ENCODE measurements at regions of chr3 and their contacts with region 1.

Region 1: GRCh38 chr3:189967254-189967865 is 153.3 kb downstream of the P3H2 start:
- DNase-seq: peak; percentile 49
- H3K4me3 ChIP-seq: no peak overlapping the region
- H3K27ac ChIP-seq: no peak overlapping the region
- H3K4me1 ChIP-seq: no peaks in the 10 kb centered on the region
- H3K27me3 ChIP-seq: no peaks in the 10 kb centered on the region
- CTCF ChIP-seq: peak; percentile 71

Region 2: DNA sequence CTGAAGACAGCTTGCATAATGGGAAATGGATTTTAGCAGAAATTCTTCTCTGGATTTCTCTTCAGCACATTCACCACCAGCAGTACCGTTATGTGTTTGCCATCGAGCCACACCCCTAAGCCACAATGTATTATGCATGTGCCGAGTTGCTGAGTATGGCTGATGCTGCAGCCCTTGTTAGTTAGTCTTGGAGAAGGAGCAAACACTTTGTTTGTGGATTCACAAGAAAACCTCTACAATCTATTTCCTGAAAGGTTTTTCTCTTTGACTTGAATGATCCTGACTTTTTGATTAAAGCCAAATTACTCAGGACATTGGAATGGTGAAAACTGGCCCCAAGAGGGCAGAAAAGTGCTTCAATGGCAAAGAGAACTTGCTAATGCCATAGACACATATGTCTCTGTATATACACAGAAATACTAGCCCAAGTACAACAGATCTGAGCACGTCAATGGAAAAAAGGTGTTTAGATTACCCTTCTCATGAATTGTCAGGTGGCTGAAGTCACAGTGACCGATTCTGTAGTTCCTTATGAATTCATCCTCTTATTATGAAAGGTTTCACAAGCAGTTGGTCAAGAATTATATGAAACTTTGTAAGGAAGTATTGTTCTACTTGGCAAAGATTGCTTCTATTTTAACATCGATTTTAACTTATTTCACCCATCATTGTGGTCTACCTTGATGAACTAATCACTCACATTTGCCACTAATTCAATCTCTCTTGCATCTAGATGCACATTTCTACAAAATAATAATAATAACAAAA is 50.3 kb after region 1 on chr3:
- intact Hi-C with region 1: loop called (anchors 5 kb)
- DNase-seq: peak; percentile 48
- H3K4me3 ChIP-seq: no peak overlapping the region
- H3K27ac ChIP-seq: no peak overlapping the region
- H3K4me1 ChIP-seq: no peaks in the 10 kb centered on the region
- H3K27me3 ChIP-seq: no peaks in the 10 kb centered on the region
- CTCF ChIP-seq: peak; percentile 24

Region 3: GRCh38 chr3:190120269-190121060 is 153.1 kb after region 1 on chr3 and contains the start of gene P3H2:
- intact Hi-C with region 1: loop called (anchors 5 kb)
- DNase-seq: peak; percentile 78
- H3K4me3 ChIP-seq: peak within 1 kb of the TSS; percentile 82
- H3K27ac ChIP-seq: peak within 1 kb of the TSS; percentile 61
- H3K4me1 ChIP-seq: no peaks in the 10 kb centered on the region
- H3K27me3 ChIP-seq: no peaks in the 10 kb centered on the region
- CTCF ChIP-seq: no peak
- total RNA-seq, gene P3H2: 14.6 to 22.2 TPM

Region 4: GRCh38 chr3:190205739-190206138 is 238.4 kb after region 1 on chr3:
- intact Hi-C with region 1: loop called (anchors 2 kb)
- DNase-seq: no peak
- H3K4me3 ChIP-seq: no peak overlapping the region
- H3K27ac ChIP-seq: no peak overlapping the region
- H3K4me1 ChIP-seq: no peaks in the 10 kb centered on the region
- H3K27me3 ChIP-seq: no peaks in the 10 kb centered on the region
- CTCF ChIP-seq: no peak

Measured in colonic mucosa (tissue), 4 donors.